Naive thymus-derived CD4-positive, alpha-beta T cell (primary cell): ENCODE measurements at regions of chr6 and their contacts with region 1.

Region 1: GRCh38 chr6:15264902-15265761 is 19.3 kb downstream of the JARID2 start:
- DNase-seq: no peak
- ATAC-seq: no peak
- H3K4me3 ChIP-seq: no peak overlapping the region
- H3K4me3 Mint-ChIP-seq: peak overlapping the region; percentile 26 to 79 (median 68)
- H3K27ac ChIP-seq: no peak overlapping the region
- H3K27ac Mint-ChIP-seq: peak overlapping the region in 4 of 9 donors; percentile 1 to 71 (median 39)
- H3K4me1 ChIP-seq: peaks cover 13 to 52% of the 10 kb centered on the region in 2 donors
- H3K4me1 Mint-ChIP-seq: peaks cover 81 to 98% (median 90%) of the 10 kb centered on the region in 7 donors
- H3K27me3 ChIP-seq: no peaks in the 10 kb centered on the region
- H3K27me3 Mint-ChIP-seq: no peaks in the 10 kb centered on the region

Region 2: GRCh38 chr6:15280028-15280427 is 14.9 kb after region 1 on chr6:
- CTCF ChIA-PET with region 1: interaction called, 4 read pairs
- POLR2A ChIA-PET with region 1: no interaction called
- intact Hi-C with region 1: loop called in 1 of 2 experiments (anchors 2 kb)
- DNase-seq: no peak
- ATAC-seq: no peak
- H3K4me3 ChIP-seq: no peak overlapping the region
- H3K4me3 Mint-ChIP-seq: peak overlapping the region in 5 of 10 donors; percentile 9 to 34 (median 22)
- H3K27ac ChIP-seq: no peak overlapping the region
- H3K27ac Mint-ChIP-seq: peak overlapping the region in 5 of 9 donors; percentile 8 to 66 (median 36)
- H3K4me1 ChIP-seq: peaks cover 4 to 25% of the 10 kb centered on the region in 2 donors
- H3K4me1 Mint-ChIP-seq: peaks cover 62 to 87% (median 80%) of the 10 kb centered on the region in 7 donors
- H3K27me3 ChIP-seq: no peaks in the 10 kb centered on the region
- H3K27me3 Mint-ChIP-seq: no peaks in the 10 kb centered on the region

Region 3: DNA sequence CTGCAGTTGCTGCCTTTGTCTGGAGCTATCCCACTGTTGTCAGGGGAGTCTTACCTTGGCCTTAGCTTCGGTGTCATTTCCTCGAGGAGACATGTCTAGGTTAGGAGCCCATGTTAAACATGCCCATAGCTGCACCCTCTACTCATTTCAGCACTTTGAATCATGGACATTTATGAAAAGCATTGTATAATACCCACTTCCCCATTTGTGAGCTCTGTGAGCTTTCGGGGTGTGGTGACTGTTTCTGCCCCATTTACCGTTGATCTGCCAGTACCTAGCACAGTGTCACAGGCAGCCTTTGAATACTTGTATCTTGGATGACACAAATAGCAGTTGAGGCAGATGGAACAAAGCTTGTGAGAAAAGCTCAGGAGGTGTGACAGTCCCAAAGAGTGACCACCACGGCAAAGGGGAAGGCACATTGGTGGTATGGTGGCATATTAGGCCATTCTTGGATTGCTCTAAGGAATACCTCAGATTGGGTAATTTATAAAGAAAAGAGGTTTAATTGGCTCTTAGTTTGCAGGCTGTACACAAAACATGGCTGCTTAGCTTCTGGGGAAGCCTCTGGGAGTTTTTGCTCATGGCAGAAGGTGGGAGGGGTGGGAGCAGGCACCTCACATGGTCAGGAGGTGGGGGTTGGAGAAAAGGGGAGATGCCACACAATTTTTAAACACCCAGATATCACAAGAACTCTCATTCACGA is 22.7 kb after region 1 on chr6:
- CTCF ChIA-PET with region 1: no interaction called
- POLR2A ChIA-PET with region 1: interaction called, 3 read pairs
- intact Hi-C with region 1: loop called in 1 of 2 experiments (anchors 2 kb)
- DNase-seq: no peak
- ATAC-seq: peak; percentile 70
- H3K4me3 ChIP-seq: no peak overlapping the region
- H3K4me3 Mint-ChIP-seq: peak overlapping the region in 2 of 10 donors; percentile 6 to 15
- H3K27ac ChIP-seq: no peak overlapping the region
- H3K27ac Mint-ChIP-seq: peak overlapping the region in 6 of 9 donors; percentile 19 to 70 (median 52)
- H3K4me1 ChIP-seq: peaks cover 0 to 5% of the 10 kb centered on the region in 2 donors
- H3K4me1 Mint-ChIP-seq: peaks cover 35 to 78% (median 65%) of the 10 kb centered on the region in 7 donors
- H3K27me3 ChIP-seq: no peaks in the 10 kb centered on the region
- H3K27me3 Mint-ChIP-seq: no peaks in the 10 kb centered on the region

Region 4: GRCh38 chr6:15299430-15300131 is 34.4 kb after region 1 on chr6:
- CTCF ChIA-PET with region 1: no interaction called
- POLR2A ChIA-PET with region 1: no interaction called
- intact Hi-C with region 1: loop called in 1 of 2 experiments (anchors 5 kb)
- DNase-seq: no peak
- ATAC-seq: peak; percentile 78
- H3K4me3 ChIP-seq: no peak overlapping the region
- H3K4me3 Mint-ChIP-seq: peak overlapping the region; percentile 7 to 58 (median 31)
- H3K27ac ChIP-seq: no peak overlapping the region
- H3K27ac Mint-ChIP-seq: peak overlapping the region in 7 of 9 donors; percentile 5 to 80 (median 69)
- H3K4me1 ChIP-seq: peaks cover 34 to 44% of the 10 kb centered on the region in 2 donors
- H3K4me1 Mint-ChIP-seq: peaks cover 65 to 87% (median 76%) of the 10 kb centered on the region in 7 donors
- H3K27me3 ChIP-seq: no peaks in the 10 kb centered on the region
- H3K27me3 Mint-ChIP-seq: no peaks in the 10 kb centered on the region